WTC11 (cell line): ENCODE measurements at regions of chr16 and their contacts with region 1.

Region 1: GRCh38 chr16:10181196-10182162 is 749 bp downstream of the GRIN2A start:
- DNase-seq: peak; percentile 88
- ATAC-seq: peak; percentile 64
- H3K4me3 Mint-ChIP-seq: peak overlapping the region; percentile 77
- H3K27ac Mint-ChIP-seq: no peak overlapping the region
- H3K4me1 Mint-ChIP-seq: peaks cover 6% of the 10 kb centered on the region; the same call in 1 of the 2 replicates
- H3K27me3 Mint-ChIP-seq: peaks cover 69% of the 10 kb centered on the region
- CTCF ChIP-seq: peak; percentile 94

Region 2: GRCh38 chr16:9647981-9648712 is 533.3 kb before region 1 on chr16:
- CTCF ChIA-PET with region 1: interaction called, 23 read pairs
- POLR2A ChIA-PET with region 1: no interaction called
- DNase-seq: no peak
- ATAC-seq: peak; percentile 52
- H3K4me3 Mint-ChIP-seq: no peak overlapping the region
- H3K27ac Mint-ChIP-seq: no peak overlapping the region
- H3K4me1 Mint-ChIP-seq: peaks cover 49% of the 10 kb centered on the region
- H3K27me3 Mint-ChIP-seq: peaks cover 3% of the 10 kb centered on the region; the same call in 1 of the 2 replicates
- CTCF ChIP-seq: peak; percentile 42

Region 3: DNA sequence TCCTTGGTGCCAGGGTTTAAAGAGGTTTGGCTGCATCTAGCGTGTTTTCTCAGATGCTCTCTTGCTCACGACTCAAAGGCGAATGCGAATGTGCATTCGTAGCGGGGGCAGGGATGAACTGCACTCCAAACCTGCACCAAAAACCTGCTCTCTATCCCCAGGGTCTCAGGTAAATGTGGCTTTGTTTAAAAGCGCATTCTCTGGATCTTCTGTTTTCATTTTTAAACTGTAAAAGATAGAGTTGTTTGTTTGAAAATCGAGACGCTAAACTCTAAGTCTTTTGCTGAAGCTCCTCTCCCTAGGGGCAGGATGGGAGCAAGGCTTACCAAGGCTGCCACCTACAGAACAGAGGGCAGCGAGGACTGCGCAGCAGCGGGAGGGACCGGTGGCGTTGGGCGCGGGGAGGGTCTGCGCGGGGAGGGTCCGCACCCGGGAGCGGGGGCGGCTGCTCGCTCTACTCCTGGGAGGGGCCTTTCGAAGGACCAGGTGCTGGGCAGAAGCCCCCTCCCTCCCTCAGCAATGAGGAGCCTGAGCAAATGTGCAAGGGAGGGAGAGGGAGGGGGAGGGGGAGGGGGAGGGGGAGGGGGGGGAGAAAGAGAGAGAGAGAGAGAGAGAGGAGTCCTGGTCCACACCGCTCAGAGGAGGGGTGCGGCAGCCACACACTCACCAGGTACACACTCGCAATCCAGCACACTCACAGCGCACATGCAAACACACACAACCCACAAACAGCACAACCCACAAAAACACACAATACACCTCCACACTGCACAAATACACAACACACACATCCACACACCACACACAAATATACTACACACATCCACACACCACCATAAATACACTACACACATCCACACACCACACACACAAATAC is 142.0 kb before region 1 on chr16:
- CTCF ChIA-PET with region 1: interaction called, 12 read pairs
- POLR2A ChIA-PET with region 1: interaction called, 3 read pairs
- DNase-seq: peak; percentile 63
- ATAC-seq: peak; percentile 84
- H3K4me3 Mint-ChIP-seq: peak overlapping the region; percentile 79
- H3K27ac Mint-ChIP-seq: peak overlapping the region; percentile 48
- H3K4me1 Mint-ChIP-seq: peaks cover 10% of the 10 kb centered on the region
- H3K27me3 Mint-ChIP-seq: peaks cover 4% of the 10 kb centered on the region
- CTCF ChIP-seq: no peak

Region 4: DNA sequence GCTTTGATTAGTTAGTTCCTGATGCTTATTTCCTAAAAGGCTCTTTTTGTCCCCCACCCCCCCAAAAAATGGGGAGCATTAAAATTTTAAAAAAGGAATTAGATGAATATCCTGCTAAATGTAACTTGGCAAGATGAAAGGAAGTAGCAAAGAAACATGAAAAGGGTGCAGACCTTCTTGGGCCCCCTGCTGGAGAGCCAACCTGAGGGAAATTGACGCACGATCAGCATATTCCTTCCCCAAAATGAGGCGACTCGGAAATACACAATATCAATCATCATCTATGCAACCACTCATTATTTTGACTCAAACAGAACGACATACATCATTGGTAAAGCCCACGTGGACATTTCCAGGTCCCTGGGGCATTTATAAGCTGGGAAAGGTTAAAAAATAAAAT is 58.9 kb before region 1 on chr16:
- CTCF ChIA-PET with region 1: interaction called, 10 read pairs
- POLR2A ChIA-PET with region 1: no interaction called
- DNase-seq: peak; percentile 20
- ATAC-seq: no peak
- H3K4me3 Mint-ChIP-seq: no peak overlapping the region
- H3K27ac Mint-ChIP-seq: no peak overlapping the region
- H3K4me1 Mint-ChIP-seq: peaks cover 28% of the 10 kb centered on the region
- H3K27me3 Mint-ChIP-seq: no peaks in the 10 kb centered on the region
- CTCF ChIP-seq: no peak

Region 5: GRCh38 chr16:10136916-10137315 is 44.6 kb before region 1 on chr16:
- CTCF ChIA-PET with region 1: interaction called, 11 read pairs
- POLR2A ChIA-PET with region 1: no interaction called
- DNase-seq: peak; percentile 36
- ATAC-seq: peak; percentile 83
- H3K4me3 Mint-ChIP-seq: no peak overlapping the region
- H3K27ac Mint-ChIP-seq: no peak overlapping the region
- H3K4me1 Mint-ChIP-seq: no peaks in the 10 kb centered on the region
- H3K27me3 Mint-ChIP-seq: no peaks in the 10 kb centered on the region
- CTCF ChIP-seq: no peak

Region 6: GRCh38 chr16:10355589-10355988 is 174.1 kb after region 1 on chr16:
- CTCF ChIA-PET with region 1: no interaction called
- POLR2A ChIA-PET with region 1: no interaction called
- DNase-seq: no peak
- ATAC-seq: no peak
- H3K4me3 Mint-ChIP-seq: no peak overlapping the region
- H3K27ac Mint-ChIP-seq: no peak overlapping the region
- H3K4me1 Mint-ChIP-seq: no peaks in the 10 kb centered on the region
- H3K27me3 Mint-ChIP-seq: 0 out of 2 replicates have a peak, but pooled peaks cover 2% of the 10 kb centered on the region
- CTCF ChIP-seq: no peak